MCF 10A (cell line): ENCODE measurements at regions of chr2 and their contacts with region 1.

Region 1: GRCh38 chr2:11344342-11344955 is at the start of gene ROCK2:
- DNase-seq: peak; percentile 82
- H3K4me3 Mint-ChIP-seq: peak within 1 kb of the TSS; percentile 91
- H3K27ac Mint-ChIP-seq: peak within 1 kb of the TSS; percentile 97
- H3K4me1 Mint-ChIP-seq: peaks cover 7% of the 10 kb centered on the region
- H3K27me3 Mint-ChIP-seq: no peaks in the 10 kb centered on the region
- CTCF ChIP-seq: no peak
- total RNA-seq, gene ROCK2: 40.0 and 40.7 TPM in 2 replicates

Region 2: GRCh38 chr2:10777842-10778723 is 566.4 kb before region 1 on chr2:
- CTCF ChIA-PET with region 1: no interaction called
- POLR2A ChIA-PET with region 1: no interaction called
- intact Hi-C with region 1: no loop called
- DNase-seq: no peak
- H3K4me3 Mint-ChIP-seq: no peak overlapping the region
- H3K27ac Mint-ChIP-seq: no peak overlapping the region
- H3K4me1 Mint-ChIP-seq: peaks cover 6% of the 10 kb centered on the region
- H3K27me3 Mint-ChIP-seq: no peaks in the 10 kb centered on the region
- CTCF ChIP-seq: no peak

Region 3: DNA sequence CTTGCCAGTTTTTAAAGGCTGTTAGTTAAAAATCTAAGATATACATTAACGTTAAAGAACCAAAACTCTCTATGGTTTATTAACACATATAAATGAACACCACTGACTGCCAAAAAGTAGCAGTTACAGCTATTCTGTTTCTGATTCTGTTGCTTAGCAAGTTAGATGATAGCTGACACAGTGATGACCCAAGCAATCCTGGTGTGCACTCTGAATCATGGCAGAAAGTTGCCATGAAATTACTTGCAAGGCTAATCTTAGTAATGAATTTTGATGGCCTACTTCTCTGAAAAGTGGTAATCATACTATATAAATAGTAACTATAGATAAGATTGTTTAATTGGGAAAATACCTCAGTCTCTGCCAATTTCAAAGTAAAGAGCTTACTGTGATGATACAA is 57.7 kb before region 1 on chr2:
- CTCF ChIA-PET with region 1: no interaction called
- POLR2A ChIA-PET with region 1: interaction called, 14 read pairs
- intact Hi-C with region 1: no loop called
- DNase-seq: no peak
- H3K4me3 Mint-ChIP-seq: no peak overlapping the region
- H3K27ac Mint-ChIP-seq: peak overlapping the region; percentile 74
- H3K4me1 Mint-ChIP-seq: peaks cover 5% of the 10 kb centered on the region
- H3K27me3 Mint-ChIP-seq: no peaks in the 10 kb centered on the region
- CTCF ChIP-seq: no peak

Region 4: DNA sequence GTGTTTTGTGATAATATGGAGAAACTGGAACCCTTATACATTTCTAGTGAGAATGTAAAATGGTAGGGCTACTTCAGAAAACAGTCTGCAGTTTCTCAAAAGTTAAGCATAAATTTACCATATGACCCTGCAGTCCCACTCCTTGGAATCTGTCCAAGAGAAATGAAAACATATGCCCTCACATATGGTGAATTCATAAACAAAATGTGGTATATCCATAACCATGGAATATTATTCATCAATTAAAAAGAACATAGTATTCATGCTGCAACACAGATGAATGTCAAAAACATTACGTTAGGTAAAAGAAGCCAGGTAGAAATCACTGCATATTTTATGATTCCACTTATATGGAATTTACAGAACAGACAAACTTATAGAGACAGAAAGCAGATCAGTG is 11.9 kb before region 1 on chr2:
- CTCF ChIA-PET with region 1: no interaction called
- POLR2A ChIA-PET with region 1: interaction called, 24 read pairs
- intact Hi-C with region 1: no loop called
- DNase-seq: no peak
- H3K4me3 Mint-ChIP-seq: no peak overlapping the region
- H3K27ac Mint-ChIP-seq: no peak overlapping the region
- H3K4me1 Mint-ChIP-seq: peaks cover 9% of the 10 kb centered on the region
- H3K27me3 Mint-ChIP-seq: no peaks in the 10 kb centered on the region
- CTCF ChIP-seq: no peak

Region 5: GRCh38 chr2:11389551-11390528 is 45.4 kb after region 1 on chr2:
- CTCF ChIA-PET with region 1: interaction called, 4 read pairs
- POLR2A ChIA-PET with region 1: interaction called, 44 read pairs
- intact Hi-C with region 1: no loop called
- DNase-seq: peak; percentile 73
- H3K4me3 Mint-ChIP-seq: no peak overlapping the region
- H3K27ac Mint-ChIP-seq: peak overlapping the region; percentile 75
- H3K4me1 Mint-ChIP-seq: peaks cover 38% of the 10 kb centered on the region
- H3K27me3 Mint-ChIP-seq: no peaks in the 10 kb centered on the region
- CTCF ChIP-seq: no peak

Region 6: DNA sequence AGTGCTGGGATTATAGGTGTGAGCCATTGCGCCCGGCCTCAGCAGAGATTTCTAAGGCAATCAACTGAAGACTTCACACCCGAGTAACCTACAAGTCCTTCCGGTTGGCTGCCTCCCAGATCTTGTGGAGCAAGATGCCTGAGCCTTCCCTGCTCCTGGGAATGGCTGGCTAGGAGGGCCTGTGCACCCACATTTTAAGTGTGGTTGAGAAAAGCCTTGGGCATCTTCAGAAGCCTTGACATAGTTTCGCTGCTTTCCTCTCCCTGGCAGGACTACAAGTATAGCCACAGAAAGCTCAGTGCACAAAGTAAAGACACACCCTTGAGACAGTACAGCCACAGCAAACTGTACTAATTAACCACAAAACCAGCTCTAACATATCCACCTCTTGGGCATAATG is 86.3 kb after region 1 on chr2:
- CTCF ChIA-PET with region 1: interaction called, 4 read pairs
- POLR2A ChIA-PET with region 1: interaction called, 11 read pairs
- intact Hi-C with region 1: no loop called
- DNase-seq: no peak
- H3K4me3 Mint-ChIP-seq: no peak overlapping the region
- H3K27ac Mint-ChIP-seq: peak overlapping the region; percentile 39
- H3K4me1 Mint-ChIP-seq: peaks cover 7% of the 10 kb centered on the region
- H3K27me3 Mint-ChIP-seq: no peaks in the 10 kb centered on the region
- CTCF ChIP-seq: no peak

Region 7: GRCh38 chr2:11465497-11466406 is 121.3 kb after region 1 on chr2 and contains the start of gene E2F6:
- CTCF ChIA-PET with region 1: interaction called, 3 read pairs
- POLR2A ChIA-PET with region 1: interaction called, 13 read pairs
- intact Hi-C with region 1: no loop called
- DNase-seq: peak; percentile 94
- H3K4me3 Mint-ChIP-seq: peak within 1 kb of the TSS; percentile 93
- H3K27ac Mint-ChIP-seq: peak within 1 kb of the TSS; percentile 87
- H3K4me1 Mint-ChIP-seq: peaks cover 15% of the 10 kb centered on the region
- H3K27me3 Mint-ChIP-seq: no peaks in the 10 kb centered on the region
- CTCF ChIP-seq: no peak
- total RNA-seq, gene E2F6: 16.1 and 16.6 TPM in 2 replicates